Activated CD8-positive, alpha-beta T cell treated with anti-CD3 and anti-CD28 coated beads, Interleukin-2, amount 10 ng/mL, durations not matched to agents 7 days and 5 days (primary cell): ENCODE measurements at regions of chr11 and their contacts with region 1.

Region 1: DNA sequence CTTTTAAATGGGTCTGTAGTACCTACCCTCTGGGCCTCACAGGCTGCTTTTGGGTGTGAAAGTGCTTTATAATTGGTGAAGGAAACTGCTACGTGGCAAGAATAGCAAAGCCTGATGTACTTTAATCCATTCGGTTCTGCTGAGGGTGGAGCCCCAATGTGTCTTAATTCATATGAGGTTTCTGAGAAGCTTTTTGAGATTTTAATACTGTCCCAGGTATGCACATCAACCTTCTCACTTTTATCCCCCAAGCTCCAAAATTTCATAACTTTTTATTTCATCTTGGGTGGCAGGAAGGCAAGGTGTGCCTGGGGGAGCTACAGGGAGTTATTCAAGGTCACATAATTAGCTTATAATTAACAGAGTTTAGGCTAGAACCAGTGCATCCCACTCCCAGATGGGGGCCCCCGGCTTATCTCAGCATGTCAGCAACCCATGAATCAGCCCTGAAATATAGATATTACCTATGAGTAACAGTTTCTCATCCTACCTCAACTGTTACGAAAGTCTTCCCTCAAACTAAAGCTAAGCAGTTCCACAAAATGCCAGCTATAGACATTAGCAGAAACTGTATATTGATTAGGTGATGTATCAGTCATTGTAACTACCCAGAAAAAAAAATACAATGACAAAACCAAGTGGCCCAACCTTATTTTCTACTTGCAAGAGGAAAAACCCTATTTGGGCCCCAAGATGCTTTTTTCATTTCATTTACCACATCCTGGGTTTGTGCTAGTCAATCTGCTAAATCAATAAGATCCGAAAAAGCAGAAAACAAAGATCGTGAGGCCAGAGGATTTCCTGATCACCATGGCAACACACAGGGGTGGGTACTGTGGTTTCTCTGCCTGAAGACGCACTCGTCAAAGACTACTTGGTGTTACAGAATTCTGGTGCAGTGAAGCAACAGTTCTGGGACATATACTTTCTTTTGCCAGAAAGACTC is 26.7 kb downstream of the CD44 start:
- DNase-seq: peak; percentile 97
- ATAC-seq: peak; percentile 68
- H3K4me3 Mint-ChIP-seq: peak overlapping the region; percentile 68
- H3K27ac Mint-ChIP-seq: peak overlapping the region; percentile 99
- H3K4me1 Mint-ChIP-seq: peaks cover 99% of the 10 kb centered on the region
- H3K27me3 Mint-ChIP-seq: no peaks in the 10 kb centered on the region

Region 2: GRCh38 chr11:34997952-34998528 is 167.7 kb before region 1 on chr11:
- CTCF ChIA-PET with region 1: interaction called, 43 read pairs
- POLR2A ChIA-PET with region 1: no interaction called
- DNase-seq: no peak
- ATAC-seq: peak; percentile 69
- H3K4me3 Mint-ChIP-seq: no peak overlapping the region
- H3K27ac Mint-ChIP-seq: no peak overlapping the region
- H3K4me1 Mint-ChIP-seq: peaks cover 24% of the 10 kb centered on the region
- H3K27me3 Mint-ChIP-seq: no peaks in the 10 kb centered on the region

Region 3: GRCh38 chr11:35040221-35040942 is 125.3 kb before region 1 on chr11:
- CTCF ChIA-PET with region 1: interaction called, 12 read pairs
- POLR2A ChIA-PET with region 1: interaction called, 6 read pairs
- DNase-seq: peak; percentile 70
- ATAC-seq: peak; percentile 87
- H3K4me3 Mint-ChIP-seq: peak overlapping the region; percentile 62
- H3K27ac Mint-ChIP-seq: peak overlapping the region; percentile 86
- H3K4me1 Mint-ChIP-seq: peaks cover 50% of the 10 kb centered on the region
- H3K27me3 Mint-ChIP-seq: peaks cover 2% of the 10 kb centered on the region

Region 4: DNA sequence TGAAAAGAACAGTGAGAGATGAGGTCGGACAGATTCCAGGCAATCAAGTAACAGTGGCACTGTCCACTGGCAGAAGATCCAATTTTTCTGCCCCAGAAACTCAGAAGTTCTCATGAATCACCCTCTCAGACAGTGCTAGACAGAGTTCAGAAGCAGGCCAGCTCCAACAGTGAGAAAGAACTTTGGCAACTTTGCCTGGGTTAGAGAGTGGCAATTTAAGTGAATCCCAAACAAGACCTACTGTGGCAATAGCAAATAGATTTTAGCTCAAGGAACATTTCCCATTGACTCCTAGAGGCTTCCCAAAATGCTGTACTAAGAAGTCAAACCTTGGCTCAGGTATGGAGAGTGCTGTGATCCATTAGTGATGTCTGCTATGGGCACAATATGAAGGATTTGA is 14.5 kb before region 1 on chr11:
- CTCF ChIA-PET with region 1: interaction called, 218 read pairs
- POLR2A ChIA-PET with region 1: interaction called, 23 read pairs
- DNase-seq: no peak
- ATAC-seq: no peak
- H3K4me3 Mint-ChIP-seq: no peak overlapping the region
- H3K27ac Mint-ChIP-seq: peak overlapping the region; percentile 14
- H3K4me1 Mint-ChIP-seq: peaks cover 96% of the 10 kb centered on the region
- H3K27me3 Mint-ChIP-seq: no peaks in the 10 kb centered on the region

Region 5: DNA sequence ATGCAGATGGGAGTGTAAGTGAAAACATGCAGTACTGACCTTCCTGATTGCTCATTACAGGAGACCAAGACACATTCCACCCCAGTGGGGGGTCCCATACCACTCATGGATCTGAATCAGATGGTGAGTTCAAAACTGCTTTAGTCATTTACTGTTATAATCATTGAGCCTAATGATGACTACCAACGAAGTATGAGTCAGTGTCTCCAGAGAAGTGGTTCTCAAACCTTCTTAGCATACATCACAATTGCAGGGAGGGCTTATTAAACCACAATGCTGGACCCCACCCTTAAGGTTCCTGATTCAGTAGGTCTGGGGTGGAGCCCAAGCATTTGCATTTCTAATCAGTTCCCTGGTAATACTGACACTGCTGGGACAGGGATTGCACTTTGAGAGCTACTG is 49.1 kb after region 1 on chr11:
- CTCF ChIA-PET with region 1: no interaction called
- POLR2A ChIA-PET with region 1: no interaction called
- DNase-seq: no peak
- ATAC-seq: no peak
- H3K4me3 Mint-ChIP-seq: no peak overlapping the region
- H3K27ac Mint-ChIP-seq: peak overlapping the region; percentile 8
- H3K4me1 Mint-ChIP-seq: peaks cover 41% of the 10 kb centered on the region
- H3K27me3 Mint-ChIP-seq: no peaks in the 10 kb centered on the region

Region 6: GRCh38 chr11:35237860-35238715 is 72.4 kb after region 1 on chr11:
- CTCF ChIA-PET with region 1: interaction called, 14 read pairs
- POLR2A ChIA-PET with region 1: interaction called, 4 read pairs
- DNase-seq: peak; percentile 73
- ATAC-seq: no peak
- H3K4me3 Mint-ChIP-seq: no peak overlapping the region
- H3K27ac Mint-ChIP-seq: no peak overlapping the region
- H3K4me1 Mint-ChIP-seq: peaks cover 87% of the 10 kb centered on the region
- H3K27me3 Mint-ChIP-seq: peaks cover 2% of the 10 kb centered on the region